ENCODE measurements at regions of chr13 and their contacts with region 1.

Region 1: DNA sequence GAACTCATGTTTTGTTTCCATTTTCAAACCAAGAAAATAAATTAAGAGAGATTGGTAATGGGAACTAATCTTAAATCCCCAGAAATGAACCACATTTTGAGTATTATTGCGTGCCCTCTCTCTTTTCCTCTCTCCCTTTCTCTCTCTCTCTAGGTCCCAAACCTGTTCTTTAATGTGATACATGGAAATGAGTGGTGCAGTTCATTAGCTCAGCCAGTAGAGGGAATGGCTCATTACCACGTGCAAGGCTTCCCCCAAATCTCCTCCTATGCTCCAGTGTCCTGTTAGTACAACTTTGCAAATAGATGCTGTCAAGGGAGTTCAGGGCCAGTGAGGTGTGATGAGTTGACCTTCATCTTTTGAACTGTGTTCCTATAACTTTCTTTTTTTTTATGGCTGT is 178.4 kb downstream of the FGF9 start:
- DNase-seq: no peak
- ATAC-seq: peak; percentile 66
- H3K4me3 Mint-ChIP-seq: no peak overlapping the region
- H3K27ac Mint-ChIP-seq: no peak overlapping the region
- H3K4me1 Mint-ChIP-seq: no peaks in the 10 kb centered on the region
- H3K27me3 Mint-ChIP-seq: no peaks in the 10 kb centered on the region
- CTCF ChIP-seq: no peak

Region 2: DNA sequence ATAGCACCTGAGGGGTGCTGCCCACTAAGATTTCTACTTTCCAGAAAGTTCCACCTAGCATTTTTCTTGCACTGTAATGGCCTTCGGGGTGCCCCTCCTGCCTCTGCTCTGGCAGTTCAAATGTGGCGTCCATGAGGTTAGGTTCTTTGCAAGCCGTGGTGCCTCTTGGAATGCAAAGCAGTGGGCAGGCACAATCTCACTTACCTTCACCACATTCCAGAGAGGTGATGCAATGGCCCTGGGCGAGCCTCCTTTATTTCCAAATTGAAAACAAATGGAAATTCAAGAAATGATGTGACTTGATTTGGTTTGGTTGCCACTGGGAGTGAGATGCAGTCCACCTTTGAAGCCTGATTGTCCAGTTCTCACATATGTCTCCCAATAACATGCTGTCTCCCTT is 131.5 kb before region 1 on chr13:
- CTCF ChIA-PET with region 1: no interaction called
- POLR2A ChIA-PET with region 1: no interaction called
- intact Hi-C with region 1: no loop called
- DNase-seq: no peak
- ATAC-seq: no peak
- H3K4me3 Mint-ChIP-seq: no peak overlapping the region
- H3K27ac Mint-ChIP-seq: no peak overlapping the region
- H3K4me1 Mint-ChIP-seq: no peaks in the 10 kb centered on the region
- H3K27me3 Mint-ChIP-seq: peaks cover 8% of the 10 kb centered on the region
- CTCF ChIP-seq: no peak

Region 3: DNA sequence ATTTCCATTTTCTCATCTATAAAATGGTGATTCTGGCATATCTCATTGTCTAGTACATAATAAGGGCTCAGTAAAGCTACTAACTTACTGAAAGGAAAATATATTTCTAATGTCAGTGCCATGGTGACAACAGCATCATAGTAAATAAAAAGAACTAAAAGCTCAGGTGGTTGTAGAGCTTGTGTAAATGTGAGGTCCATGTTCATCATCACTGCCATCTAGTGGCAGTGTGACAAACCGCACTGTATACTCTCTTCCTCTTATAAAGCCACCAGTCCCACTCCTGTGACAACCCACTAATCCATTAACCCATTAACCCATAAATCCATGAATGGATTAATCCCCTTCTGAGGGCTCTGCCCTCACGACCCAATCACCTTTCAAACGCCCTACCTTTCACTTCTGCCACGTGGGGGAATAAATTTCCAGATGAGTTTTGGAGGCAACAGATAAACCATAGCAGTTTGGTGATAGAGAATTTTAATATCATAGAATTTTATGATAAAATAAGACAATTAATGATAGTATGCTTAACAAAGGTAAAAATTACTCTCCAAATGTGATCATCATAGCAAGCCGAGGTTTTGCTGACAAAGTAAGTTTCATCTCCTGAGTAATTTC is 1171.0 kb after region 1 on chr13:
- CTCF ChIA-PET with region 1: no interaction called
- POLR2A ChIA-PET with region 1: no interaction called
- intact Hi-C with region 1: loop called (anchors 2 kb)
- DNase-seq: no peak
- ATAC-seq: peak; percentile 64
- H3K4me3 Mint-ChIP-seq: no peak overlapping the region
- H3K27ac Mint-ChIP-seq: no peak overlapping the region
- H3K4me1 Mint-ChIP-seq: no peaks in the 10 kb centered on the region
- H3K27me3 Mint-ChIP-seq: no peaks in the 10 kb centered on the region
- CTCF ChIP-seq: no peak

Measured in activated B cell treated with CpG ODN at 0.5 μM for 24 hours (primary cell).